CD14-positive monocyte (primary cell): ENCODE measurements at regions of chr5 and their contacts with region 1.

Region 1: DNA sequence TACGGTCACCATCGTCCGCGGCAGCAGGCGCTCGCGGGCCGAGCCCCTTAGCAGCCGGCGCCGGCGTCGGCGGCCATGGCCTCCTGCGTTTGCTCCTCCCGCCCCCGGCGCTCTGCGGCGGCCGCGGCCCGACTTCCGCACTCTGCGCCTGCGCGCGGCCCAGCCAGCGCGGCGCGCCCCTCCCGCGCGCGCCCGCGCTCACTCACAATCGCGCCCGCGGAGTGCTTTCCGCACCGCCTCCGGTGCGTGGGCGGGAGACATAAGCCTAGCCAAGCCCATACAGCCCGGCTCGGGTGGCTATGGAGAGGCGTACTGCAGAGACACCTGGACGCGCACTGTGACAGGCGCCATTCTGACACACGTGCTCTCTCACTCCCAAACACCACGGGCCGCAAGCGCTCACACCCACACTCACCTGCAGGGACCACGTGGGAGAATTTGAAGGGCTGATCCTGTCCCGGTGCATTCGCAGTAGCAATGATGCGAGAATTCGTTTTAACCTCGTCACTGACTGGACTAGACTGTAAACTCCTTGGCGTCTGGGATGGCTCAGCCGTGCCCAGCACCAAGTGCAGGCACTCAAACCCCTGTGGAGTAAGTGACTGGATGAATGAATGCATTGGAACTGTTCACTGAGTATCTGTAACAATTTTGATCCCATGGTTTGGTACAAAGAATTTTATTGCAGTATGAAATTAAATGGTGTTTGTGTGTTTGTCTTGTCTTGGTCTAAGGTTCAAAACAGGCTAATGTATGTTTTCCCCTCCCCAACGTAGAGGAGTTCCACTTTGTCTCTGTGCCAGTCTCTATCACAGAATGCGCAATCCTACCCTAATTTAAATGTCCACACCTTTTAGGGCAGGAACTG is at the start of gene RNF145:
- DNase-seq: peak; percentile 71 to 83 (median 77)
- H3K4me3 ChIP-seq: peak within 1 kb of the TSS; percentile 83 to 93 (median 86)
- H3K4me3 Mint-ChIP-seq: peak within 1 kb of the TSS; percentile 96 to 100
- H3K27ac ChIP-seq: peak within 1 kb of the TSS; percentile 84
- H3K27ac Mint-ChIP-seq: peak within 1 kb of the TSS; percentile 88 to 97 (median 95)
- H3K4me1 ChIP-seq: peaks cover 36 to 56% of the 10 kb centered on the region in 2 donors
- H3K4me1 Mint-ChIP-seq: peaks cover 63% of the 10 kb centered on the region
- H3K27me3 ChIP-seq: no peaks in the 10 kb centered on the region
- H3K27me3 Mint-ChIP-seq: peaks cover 0 to 4% (median 0%) of the 10 kb centered on the region in 3 donors
- CTCF ChIP-seq: no peak
- polyA plus RNA-seq, gene RNF145: 9.1 to 23.6 (median 11.5) TPM

Region 2: GRCh38 chr5:159262859-159263567 is 53.3 kb after region 1 on chr5 and contains the start of gene UBLCP1:
- intact Hi-C with region 1: loop called (anchors 5 kb)
- DNase-seq: peak; percentile 81 to 85 (median 82)
- H3K4me3 ChIP-seq: peak within 1 kb of the TSS; percentile 58 to 83 (median 68)
- H3K4me3 Mint-ChIP-seq: peak within 1 kb of the TSS; percentile 98
- H3K27ac ChIP-seq: peak within 1 kb of the TSS; percentile 81 to 94
- H3K27ac Mint-ChIP-seq: peak within 1 kb of the TSS; percentile 97 to 100 (median 99)
- H3K4me1 ChIP-seq: peaks cover 15 to 21% of the 10 kb centered on the region in 2 donors
- H3K4me1 Mint-ChIP-seq: peaks cover 25% of the 10 kb centered on the region
- H3K27me3 ChIP-seq: no peaks in the 10 kb centered on the region
- H3K27me3 Mint-ChIP-seq: peaks cover 2 to 9% (median 8%) of the 10 kb centered on the region in 3 donors
- CTCF ChIP-seq: no peak
- polyA plus RNA-seq, gene UBLCP1: 8.8 to 31.5 (median 22.7) TPM